ENCODE measurements at regions of chr2 and their contacts with region 1.

Region 1: GRCh38 chr2:147045113-147045512 is 799.7 kb upstream of the ACVR2A start:
- DNase-seq: peak; percentile 73
- H3K4me3 ChIP-seq: no peak overlapping the region
- H3K27ac ChIP-seq: no peak overlapping the region
- H3K4me1 ChIP-seq: no peaks in the 10 kb centered on the region
- H3K27me3 ChIP-seq: no peaks in the 10 kb centered on the region
- CTCF ChIP-seq: peak; percentile 78

Region 2: DNA sequence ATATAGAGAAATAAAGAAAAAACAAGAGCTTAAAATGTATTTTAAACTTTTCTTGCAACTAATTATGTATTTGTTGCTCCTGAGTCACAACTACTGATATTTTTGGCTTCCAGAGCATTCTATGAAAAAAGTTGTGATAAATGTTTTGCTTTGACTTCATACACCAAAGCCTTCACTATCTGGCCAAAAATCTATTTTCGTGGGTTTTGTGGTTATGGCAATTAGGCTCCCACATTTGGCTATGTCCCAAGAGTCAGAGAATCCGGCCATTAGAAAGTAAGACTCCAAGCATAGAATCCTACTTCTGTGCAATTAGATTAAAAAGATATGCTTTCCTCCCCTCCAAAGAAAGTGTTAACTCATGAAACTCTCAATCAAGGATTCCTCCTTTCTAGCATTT is 656.4 kb before region 1 on chr2:
- CTCF ChIA-PET with region 1: no interaction called
- POLR2A ChIA-PET with region 1: no interaction called
- intact Hi-C with region 1: no loop called
- DNase-seq: peak; percentile 33
- H3K4me3 ChIP-seq: no peak overlapping the region
- H3K27ac ChIP-seq: no peak overlapping the region
- H3K4me1 ChIP-seq: no peaks in the 10 kb centered on the region
- H3K27me3 ChIP-seq: no peaks in the 10 kb centered on the region
- CTCF ChIP-seq: no peak

Region 3: DNA sequence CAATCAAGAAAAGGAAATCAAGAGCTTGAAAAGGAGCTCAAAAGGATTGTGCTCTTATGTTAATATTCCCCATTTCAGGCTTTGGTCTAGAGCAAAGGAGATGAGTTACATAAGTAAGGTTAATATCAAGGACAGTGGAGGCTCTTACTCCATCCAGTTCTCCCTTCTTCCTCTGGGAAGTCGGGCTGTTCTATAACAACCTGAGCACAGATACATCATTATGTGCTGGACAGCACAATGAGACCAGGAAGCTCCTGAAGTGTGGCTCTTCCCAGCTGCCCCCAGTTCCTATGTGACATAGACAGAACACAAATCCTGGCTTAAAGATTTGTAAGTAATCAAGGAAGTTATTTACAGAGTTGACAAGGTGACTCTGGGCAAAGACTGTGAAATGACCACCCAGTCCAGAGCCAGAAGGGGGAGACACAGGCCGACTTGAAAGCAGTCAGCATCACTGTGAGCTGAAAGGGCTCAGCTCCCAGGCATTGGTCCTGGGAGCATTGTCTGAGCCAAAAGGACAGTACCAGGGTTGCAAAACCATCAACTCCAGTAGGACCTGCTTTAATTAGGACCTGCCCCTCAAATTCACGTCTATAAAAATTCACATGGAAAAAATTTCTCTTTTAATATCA is 117.9 kb before region 1 on chr2:
- CTCF ChIA-PET with region 1: no interaction called
- POLR2A ChIA-PET with region 1: no interaction called
- intact Hi-C with region 1: loop called (anchors 10 kb)
- DNase-seq: peak; percentile 73
- H3K4me3 ChIP-seq: no peak overlapping the region
- H3K27ac ChIP-seq: no peak overlapping the region
- H3K4me1 ChIP-seq: no peaks in the 10 kb centered on the region
- H3K27me3 ChIP-seq: no peaks in the 10 kb centered on the region
- CTCF ChIP-seq: peak; percentile 73

Region 4: GRCh38 chr2:147076634-147077033 is 31.5 kb after region 1 on chr2:
- CTCF ChIA-PET with region 1: no interaction called
- POLR2A ChIA-PET with region 1: no interaction called
- intact Hi-C with region 1: no loop called
- DNase-seq: no peak
- H3K4me3 ChIP-seq: no peak overlapping the region
- H3K27ac ChIP-seq: no peak overlapping the region
- H3K4me1 ChIP-seq: no peaks in the 10 kb centered on the region
- H3K27me3 ChIP-seq: no peaks in the 10 kb centered on the region
- CTCF ChIP-seq: no peak

Region 5: DNA sequence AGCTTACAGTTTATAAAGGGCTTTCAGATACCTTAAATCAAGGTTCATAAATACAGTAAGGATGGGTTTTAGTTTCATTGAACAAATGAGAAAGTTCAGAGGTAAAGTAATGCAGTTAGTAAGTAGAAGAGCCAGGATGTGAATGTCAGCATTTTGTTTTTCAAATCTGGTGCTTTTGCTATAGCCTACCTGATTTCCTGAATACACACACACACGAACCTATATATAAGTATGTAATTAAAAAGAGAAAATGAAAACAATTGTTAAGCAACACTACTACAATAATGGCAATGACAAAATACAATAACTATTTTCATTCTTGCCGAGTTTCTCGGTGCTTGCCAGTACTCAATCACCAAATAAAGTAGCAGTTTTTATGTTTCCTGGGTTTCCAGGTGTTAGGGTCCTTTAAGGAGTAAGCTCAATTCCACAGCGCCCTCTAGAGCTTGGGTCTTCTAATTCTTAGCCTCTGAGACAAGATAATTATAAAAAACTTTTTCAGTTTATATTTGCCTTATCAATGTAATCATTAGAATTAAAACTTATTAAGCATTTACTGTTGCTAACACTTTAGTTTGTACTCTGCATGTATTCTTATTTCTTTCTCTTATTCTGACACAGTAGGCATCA is 286.8 kb after region 1 on chr2:
- CTCF ChIA-PET with region 1: no interaction called
- POLR2A ChIA-PET with region 1: no interaction called
- intact Hi-C with region 1: loop called (anchors 2 kb)
- DNase-seq: peak; percentile 57
- H3K4me3 ChIP-seq: no peak overlapping the region
- H3K27ac ChIP-seq: no peak overlapping the region
- H3K4me1 ChIP-seq: no peaks in the 10 kb centered on the region
- H3K27me3 ChIP-seq: no peaks in the 10 kb centered on the region
- CTCF ChIP-seq: peak; percentile 80

Region 6: DNA sequence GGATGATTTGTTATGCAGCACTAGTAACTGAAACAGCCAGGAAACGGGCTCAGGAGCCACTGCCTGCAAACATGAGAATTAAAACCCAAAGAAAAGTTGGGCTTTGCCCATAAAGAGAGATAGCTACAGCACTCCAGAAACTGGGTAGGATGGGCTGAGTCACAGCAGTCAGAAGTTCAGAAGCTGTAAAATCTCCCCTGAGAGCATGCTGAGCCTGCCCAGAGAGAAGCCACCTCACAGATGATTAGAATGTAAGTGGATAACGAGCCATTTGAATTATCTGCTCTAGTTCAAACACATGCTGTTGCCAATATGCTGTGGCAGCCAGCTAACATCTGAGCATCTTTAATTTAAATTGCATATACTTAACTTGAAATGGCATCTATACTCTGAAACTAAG is 411.7 kb after region 1 on chr2:
- CTCF ChIA-PET with region 1: no interaction called
- POLR2A ChIA-PET with region 1: no interaction called
- intact Hi-C with region 1: loop called (anchors 10 kb)
- DNase-seq: peak; percentile 83
- H3K4me3 ChIP-seq: no peak overlapping the region
- H3K27ac ChIP-seq: no peak overlapping the region
- H3K4me1 ChIP-seq: peaks cover 35% of the 10 kb centered on the region
- H3K27me3 ChIP-seq: no peaks in the 10 kb centered on the region
- CTCF ChIP-seq: no peak

Measured in A673 (cell line).